MCF 10A (cell line): ENCODE measurements at regions of chr15 and their contacts with region 1.

Region 1: GRCh38 chr15:72312605-72313447 is 7.1 kb downstream of the CELF6 start:
- DNase-seq: peak; percentile 75
- H3K4me3 Mint-ChIP-seq: no peak overlapping the region
- H3K27ac Mint-ChIP-seq: no peak overlapping the region
- H3K4me1 Mint-ChIP-seq: peaks cover 5% of the 10 kb centered on the region
- H3K27me3 Mint-ChIP-seq: peaks cover 21% of the 10 kb centered on the region
- CTCF ChIP-seq: peak; percentile 80

Region 2: DNA sequence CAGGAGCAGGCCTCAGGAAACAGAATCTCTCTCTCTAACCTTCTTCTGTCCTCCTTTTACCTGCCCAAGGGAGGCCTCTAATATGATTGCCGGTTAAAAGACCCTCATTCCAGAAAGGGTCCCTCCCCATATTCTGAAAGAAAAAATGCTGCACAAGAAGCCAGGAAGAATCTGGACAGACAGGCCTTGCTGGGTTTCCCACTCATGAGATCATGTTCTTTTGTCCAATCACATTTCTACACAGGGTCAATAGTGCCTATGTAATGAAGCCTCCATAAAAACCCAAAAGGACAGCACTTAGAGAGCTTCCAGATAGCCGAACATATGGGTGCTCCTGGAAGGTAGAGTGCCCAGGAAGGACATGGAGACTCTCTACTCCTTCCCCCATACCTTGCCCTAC is 340.9 kb before region 1 on chr15:
- CTCF ChIA-PET with region 1: no interaction called
- POLR2A ChIA-PET with region 1: no interaction called
- intact Hi-C with region 1: no loop called
- DNase-seq: no peak
- H3K4me3 Mint-ChIP-seq: no peak overlapping the region
- H3K27ac Mint-ChIP-seq: no peak overlapping the region
- H3K4me1 Mint-ChIP-seq: no peaks in the 10 kb centered on the region
- H3K27me3 Mint-ChIP-seq: no peaks in the 10 kb centered on the region
- CTCF ChIP-seq: no peak

Region 3: GRCh38 chr15:71997691-71998090 is 315.1 kb before region 1 on chr15:
- CTCF ChIA-PET with region 1: no interaction called
- POLR2A ChIA-PET with region 1: no interaction called
- intact Hi-C with region 1: no loop called
- DNase-seq: no peak
- H3K4me3 Mint-ChIP-seq: no peak overlapping the region
- H3K27ac Mint-ChIP-seq: no peak overlapping the region
- H3K4me1 Mint-ChIP-seq: no peaks in the 10 kb centered on the region
- H3K27me3 Mint-ChIP-seq: no peaks in the 10 kb centered on the region
- CTCF ChIP-seq: no peak

Region 4: GRCh38 chr15:72168111-72168808 is 144.6 kb before region 1 on chr15:
- CTCF ChIA-PET with region 1: no interaction called
- POLR2A ChIA-PET with region 1: no interaction called
- intact Hi-C with region 1: no loop called
- DNase-seq: peak; percentile 54
- H3K4me3 Mint-ChIP-seq: peak overlapping the region; percentile 46
- H3K27ac Mint-ChIP-seq: peak overlapping the region; percentile 95
- H3K4me1 Mint-ChIP-seq: peaks cover 22% of the 10 kb centered on the region
- H3K27me3 Mint-ChIP-seq: no peaks in the 10 kb centered on the region
- CTCF ChIP-seq: no peak

Region 5: DNA sequence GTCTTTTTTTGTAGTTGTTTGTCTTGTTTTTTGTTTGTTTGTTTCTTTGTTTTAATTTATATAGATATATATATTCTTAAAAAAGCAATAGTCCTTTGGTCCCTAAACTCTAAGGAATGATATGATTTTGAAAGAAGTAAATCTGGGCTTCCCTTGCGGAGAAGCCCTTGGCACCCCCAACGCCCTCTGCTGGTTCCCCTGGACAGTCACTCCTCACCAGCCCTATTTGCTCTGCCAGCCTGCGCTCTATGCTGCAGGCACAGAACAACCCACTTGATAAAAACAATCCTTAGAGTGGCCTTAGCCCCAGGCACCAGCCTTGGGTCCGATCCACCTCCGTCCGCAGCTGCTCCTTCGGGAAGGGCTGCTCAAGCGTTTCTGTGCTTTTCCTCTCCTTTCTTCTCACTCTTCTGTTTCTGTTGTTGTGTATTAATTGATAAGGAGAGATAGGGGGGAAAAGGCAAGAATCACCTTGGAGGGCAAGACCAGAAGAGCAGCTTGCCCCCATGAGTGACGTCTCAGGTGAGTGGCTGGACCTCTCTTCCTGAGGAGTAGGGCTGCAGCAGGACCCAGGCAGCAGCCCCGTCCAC is 26.8 kb before region 1 on chr15:
- CTCF ChIA-PET with region 1: interaction called, 10 read pairs
- POLR2A ChIA-PET with region 1: no interaction called
- intact Hi-C with region 1: no loop called
- DNase-seq: peak; percentile 43
- H3K4me3 Mint-ChIP-seq: no peak overlapping the region
- H3K27ac Mint-ChIP-seq: no peak overlapping the region
- H3K4me1 Mint-ChIP-seq: no peaks in the 10 kb centered on the region
- H3K27me3 Mint-ChIP-seq: no peaks in the 10 kb centered on the region
- CTCF ChIP-seq: peak; percentile 56

Region 6: GRCh38 chr15:72532991-72533601 is 220.3 kb after region 1 on chr15:
- CTCF ChIA-PET with region 1: interaction called, 10 read pairs
- POLR2A ChIA-PET with region 1: no interaction called
- intact Hi-C with region 1: no loop called
- DNase-seq: peak; percentile 8
- H3K4me3 Mint-ChIP-seq: no peak overlapping the region
- H3K27ac Mint-ChIP-seq: peak overlapping the region; percentile 19
- H3K4me1 Mint-ChIP-seq: no peaks in the 10 kb centered on the region
- H3K27me3 Mint-ChIP-seq: no peaks in the 10 kb centered on the region
- CTCF ChIP-seq: peak; percentile 38

Region 7: DNA sequence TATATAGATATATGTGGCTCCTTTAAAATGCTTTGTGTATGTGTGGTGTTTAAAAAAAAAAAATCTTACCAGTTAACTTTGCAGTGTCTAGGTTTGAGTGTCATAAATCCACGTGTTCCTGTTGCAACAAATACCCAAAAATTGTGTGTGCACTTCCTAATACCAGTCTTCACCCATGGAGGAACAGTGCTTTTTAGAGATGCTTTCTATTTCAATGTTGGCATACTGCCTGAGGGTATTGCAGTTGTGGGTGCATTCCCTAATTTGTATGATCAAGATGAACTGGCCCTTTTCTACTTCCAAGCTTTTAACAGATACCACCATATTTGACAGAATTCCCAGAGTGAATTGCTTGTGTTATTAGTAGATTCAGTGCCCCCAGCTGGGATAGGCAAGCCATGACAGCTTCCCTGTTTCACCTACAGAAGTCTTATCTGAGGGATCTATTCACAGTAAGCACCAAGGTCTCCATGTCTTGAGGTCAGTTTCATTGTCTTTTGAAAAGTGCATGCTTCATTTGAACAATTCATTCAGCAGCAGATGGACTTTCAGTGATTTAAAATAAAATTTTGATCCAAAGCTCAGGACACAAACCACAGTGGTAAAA is 272.8 kb after region 1 on chr15:
- CTCF ChIA-PET with region 1: interaction called, 3 read pairs
- POLR2A ChIA-PET with region 1: interaction called, 3 read pairs
- intact Hi-C with region 1: loop called (anchors 2 kb)
- DNase-seq: peak; percentile 22
- H3K4me3 Mint-ChIP-seq: no peak overlapping the region
- H3K27ac Mint-ChIP-seq: no peak overlapping the region
- H3K4me1 Mint-ChIP-seq: no peaks in the 10 kb centered on the region
- H3K27me3 Mint-ChIP-seq: no peaks in the 10 kb centered on the region
- CTCF ChIP-seq: no peak